Spleen (tissue), 13 donors: ENCODE measurements at regions of chr12 and their contacts with region 1.

Region 1: GRCh38 chr12:6278439-6279255 is 31.8 kb upstream of the PLEKHG6 start:
- DNase-seq: peak; percentile 96
- H3K4me3 ChIP-seq: peak overlapping the region; percentile 31 to 74 (median 50)
- H3K27ac ChIP-seq: peak overlapping the region in 7 of 8 donors; percentile 54 to 87 (median 80)
- H3K4me1 ChIP-seq: peaks cover 10 to 39% (median 25%) of the 10 kb centered on the region in 6 donors
- H3K27me3 ChIP-seq: peaks cover 0 to 57% (median 0%) of the 10 kb centered on the region in 7 donors
- CTCF ChIP-seq: peak; percentile 48 to 100 (median 97)
- POLR2A ChIP-seq: no peak

Region 2: DNA sequence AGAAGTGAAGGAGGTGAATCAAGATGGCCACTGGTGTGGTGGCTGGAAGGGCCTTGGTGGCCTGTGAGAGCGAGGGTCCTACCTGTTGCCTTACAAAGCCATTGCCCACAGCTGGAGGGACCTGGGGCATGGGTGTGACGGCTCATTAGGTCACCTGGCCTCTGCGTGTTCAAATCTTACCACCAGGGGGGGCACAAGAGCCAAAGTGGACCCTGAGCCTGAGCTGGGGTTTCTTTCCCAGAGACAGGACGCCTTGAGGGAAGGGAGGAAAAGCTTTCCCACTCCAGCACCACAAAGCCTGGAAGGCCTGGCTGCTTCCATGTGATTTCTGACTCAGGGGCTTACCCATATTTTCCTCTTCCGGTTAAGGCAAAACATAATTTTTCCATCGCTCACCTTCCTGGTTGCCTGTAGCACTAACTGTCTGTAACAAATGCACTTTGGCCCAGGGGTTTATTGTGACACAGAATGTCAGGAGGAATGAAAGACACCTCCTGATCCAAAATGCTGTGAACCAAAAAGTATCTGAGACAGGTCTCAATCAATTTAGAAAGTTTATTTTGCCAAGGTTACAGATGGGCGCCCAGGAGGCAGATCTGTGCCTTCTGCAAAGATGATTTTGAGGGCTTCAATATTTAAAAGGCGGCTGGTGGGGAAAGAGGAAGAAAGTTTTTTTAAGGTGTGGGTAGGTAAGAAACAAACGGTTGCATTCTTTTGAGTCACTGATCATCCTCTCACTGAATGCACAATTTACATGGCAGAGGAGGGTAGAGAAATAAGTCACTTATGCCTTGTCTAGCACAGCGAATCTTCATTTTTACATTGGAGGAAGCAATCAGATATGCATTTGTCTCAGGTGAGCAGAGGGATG is 82.7 kb before region 1 on chr12:
- intact Hi-C with region 1: loop called (anchors 2 kb)
- DNase-seq: peak; percentile 88
- H3K4me3 ChIP-seq: no peak overlapping the region
- H3K27ac ChIP-seq: peak overlapping the region in 6 of 8 donors; percentile 13 to 58 (median 37)
- H3K4me1 ChIP-seq: peaks cover 4 to 35% (median 27%) of the 10 kb centered on the region in 6 donors
- H3K27me3 ChIP-seq: peaks cover 0 to 40% (median 7%) of the 10 kb centered on the region in 7 donors
- CTCF ChIP-seq: peak; percentile 84 to 94 (median 92)
- POLR2A ChIP-seq: no peak